Prostate gland (tissue), 2 donors: ENCODE measurements at regions of chr19 and their contacts with region 1.

Region 1: DNA sequence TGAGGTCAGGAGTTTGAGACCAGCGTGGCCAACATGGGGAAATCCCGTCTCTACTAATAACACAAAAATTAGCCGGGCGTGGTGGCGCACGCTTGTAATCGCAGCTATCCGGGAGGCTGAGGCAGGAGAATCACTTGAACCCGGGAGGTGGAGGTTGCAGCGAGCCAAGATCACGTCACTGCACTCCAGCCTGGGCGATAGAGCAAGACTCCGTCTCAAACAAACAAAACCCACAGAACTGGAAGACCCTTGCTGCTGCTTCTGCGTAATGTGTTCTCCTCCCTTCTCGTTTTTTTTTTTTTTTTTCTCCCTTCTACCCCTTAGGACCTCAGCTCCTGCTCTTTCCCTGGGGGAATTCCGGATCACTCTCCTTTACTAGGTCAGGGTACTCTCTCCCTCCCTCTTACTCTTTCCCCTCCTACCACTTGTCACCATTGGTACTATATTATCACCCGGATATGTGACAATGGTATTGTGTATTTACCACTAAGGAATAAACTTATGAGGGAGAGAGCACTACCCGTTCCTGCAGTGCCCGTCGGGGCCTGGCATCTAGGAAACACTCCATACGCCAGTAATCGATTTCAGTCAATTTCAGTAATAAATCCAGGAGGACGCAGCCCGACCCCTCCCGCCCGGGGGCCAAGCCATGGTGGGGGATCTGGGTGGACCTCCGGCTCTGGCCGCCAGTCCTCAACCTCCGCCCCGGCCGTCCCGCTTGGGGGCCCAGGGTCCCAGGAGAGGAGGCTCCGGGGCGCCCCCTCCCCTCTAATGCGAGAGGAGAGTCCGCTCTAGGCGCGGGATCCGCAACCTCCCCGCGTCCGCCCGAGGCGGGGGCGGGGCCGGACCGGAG is 429 bp upstream of the GARRE1 start:
- DNase-seq: no peak
- H3K4me3 ChIP-seq: peak overlapping the region; percentile 85 to 88
- H3K27ac ChIP-seq: peak overlapping the region; percentile 97
- H3K4me1 ChIP-seq: no peaks in the 10 kb centered on the region
- H3K27me3 ChIP-seq: no peaks in the 10 kb centered on the region
- CTCF ChIP-seq: peak in 1 of 4 experiments; percentile 28
- POLR2A ChIP-seq: peak; percentile 91

Region 2: GRCh38 chr19:34171877-34172660 is 81.9 kb before region 1 on chr19 and contains the start of gene LSM14A:
- intact Hi-C with region 1: loop called (anchors 10 kb)
- DNase-seq: peak; percentile 89
- H3K4me3 ChIP-seq: peak within 1 kb of the TSS; percentile 89 to 96
- H3K27ac ChIP-seq: peak within 1 kb of the TSS; percentile 99
- H3K4me1 ChIP-seq: peaks cover 4% of the 10 kb centered on the region
- H3K27me3 ChIP-seq: no peaks in the 10 kb centered on the region
- CTCF ChIP-seq: peak in 1 of 4 experiments; percentile 21
- POLR2A ChIP-seq: peak; percentile 55
- total RNA-seq, gene LSM14A: 145 to 189 TPM

Region 3: GRCh38 chr19:34336781-34337271 is 82.9 kb after region 1 on chr19:
- intact Hi-C with region 1: loop called (anchors 10 kb)
- DNase-seq: no peak
- H3K4me3 ChIP-seq: no peak overlapping the region
- H3K27ac ChIP-seq: peak overlapping the region in 1 of 2 donors; percentile 17
- H3K4me1 ChIP-seq: no peaks in the 10 kb centered on the region
- H3K27me3 ChIP-seq: no peaks in the 10 kb centered on the region
- CTCF ChIP-seq: peak; percentile 39 to 49 (median 48)
- POLR2A ChIP-seq: no peak